ENCODE measurements at regions of chr11 and their contacts with region 1.

Region 1: DNA sequence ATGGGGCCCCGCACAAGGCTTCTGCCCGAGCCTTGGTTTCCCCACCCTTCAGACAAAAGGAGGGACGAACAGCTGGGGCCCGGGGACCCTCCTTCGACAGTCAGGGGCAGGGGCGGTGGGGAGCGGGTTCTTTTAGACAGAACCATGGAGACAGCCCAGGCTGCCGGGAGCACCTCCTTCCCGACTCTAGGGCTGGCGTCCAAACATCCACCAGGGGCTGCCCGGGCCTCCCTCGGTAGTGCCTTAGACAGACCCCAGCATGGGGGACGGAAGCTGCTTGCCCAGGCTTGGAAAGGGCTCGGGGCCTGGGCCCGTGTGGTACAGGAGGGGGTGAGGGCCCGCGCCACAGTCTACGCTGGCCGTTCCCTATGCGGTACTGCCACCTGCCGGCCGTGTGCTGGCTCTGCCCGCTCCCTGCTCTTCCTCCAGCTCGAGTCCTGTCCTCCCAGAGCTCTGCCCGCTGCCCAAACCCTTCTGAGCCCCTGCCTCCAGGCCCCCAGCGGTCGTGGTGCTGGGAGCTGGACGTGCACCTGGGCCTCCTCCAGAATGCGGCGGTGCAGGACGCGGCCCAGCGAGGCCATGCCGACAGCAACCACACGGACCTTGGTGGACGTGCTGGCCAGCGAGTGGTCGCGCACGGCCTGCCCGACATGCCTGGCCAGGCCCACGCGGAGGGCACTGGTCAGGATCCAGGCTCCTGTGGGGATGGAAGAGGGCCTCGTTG is 20.1 kb downstream of the TSSC4 start:
- DNase-seq: peak; percentile 84
- ATAC-seq: peak; percentile 94
- H3K4me3 Mint-ChIP-seq: no peak overlapping the region
- H3K27ac Mint-ChIP-seq: no peak overlapping the region
- H3K4me1 Mint-ChIP-seq: no peaks in the 10 kb centered on the region
- H3K27me3 Mint-ChIP-seq: peaks cover 4% of the 10 kb centered on the region
- CTCF ChIP-seq: peak; percentile 78

Region 2: GRCh38 chr11:2186669-2187279 is 233.9 kb before region 1 on chr11:
- CTCF ChIA-PET with region 1: interaction called, 28 read pairs
- POLR2A ChIA-PET with region 1: no interaction called
- DNase-seq: peak; percentile 56
- ATAC-seq: peak; percentile 78
- H3K4me3 Mint-ChIP-seq: no peak overlapping the region
- H3K27ac Mint-ChIP-seq: no peak overlapping the region
- H3K4me1 Mint-ChIP-seq: no peaks in the 10 kb centered on the region
- H3K27me3 Mint-ChIP-seq: peaks cover 5% of the 10 kb centered on the region
- CTCF ChIP-seq: peak; percentile 41

Region 3: DNA sequence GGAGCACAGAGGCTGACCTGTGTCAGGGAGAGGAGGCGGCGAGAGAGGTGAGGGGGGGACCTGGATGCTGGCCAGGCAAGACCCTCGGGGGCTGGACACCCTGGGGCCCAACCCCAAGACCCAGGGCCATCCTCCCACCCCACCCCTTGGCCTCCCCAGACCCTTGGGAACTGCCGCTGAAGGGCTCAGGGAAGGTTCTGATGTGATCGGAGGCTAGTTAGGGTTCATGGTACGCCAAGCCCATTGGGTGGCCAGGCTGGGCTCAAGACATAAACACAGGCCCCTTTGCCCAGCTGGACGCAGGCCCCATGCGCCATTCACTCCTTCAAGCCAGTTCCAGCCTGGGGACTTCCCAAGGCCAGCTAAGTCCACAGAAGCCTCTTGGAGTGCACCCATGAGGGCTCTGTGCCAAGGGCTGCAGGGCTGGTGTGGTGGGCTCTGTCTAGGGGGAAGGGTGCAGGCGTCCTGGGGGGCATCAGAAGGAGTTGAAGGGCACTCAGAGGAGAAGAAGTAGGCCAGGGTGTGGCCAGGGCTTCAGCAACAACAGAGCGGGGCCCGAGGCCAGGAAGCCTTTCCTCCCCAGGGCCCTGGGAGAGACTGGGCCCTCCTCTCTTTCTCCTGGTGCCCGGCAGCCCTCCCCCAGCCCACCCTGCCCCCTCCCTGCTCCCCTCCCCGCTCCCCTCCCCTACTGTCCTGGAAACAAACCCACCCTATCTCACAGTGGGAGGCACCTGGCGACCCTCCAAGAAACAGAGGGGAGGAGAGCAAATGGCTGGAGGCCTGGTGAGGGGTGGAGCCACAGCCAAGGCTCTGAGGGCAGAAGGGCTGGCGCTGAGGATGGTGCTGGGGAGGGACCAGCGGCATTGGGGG is 105.9 kb before region 1 on chr11:
- CTCF ChIA-PET with region 1: interaction called, 29 read pairs
- POLR2A ChIA-PET with region 1: no interaction called
- DNase-seq: no peak
- ATAC-seq: no peak
- H3K4me3 Mint-ChIP-seq: no peak overlapping the region
- H3K27ac Mint-ChIP-seq: no peak overlapping the region
- H3K4me1 Mint-ChIP-seq: no peaks in the 10 kb centered on the region
- H3K27me3 Mint-ChIP-seq: peaks cover under 1% of the 10 kb centered on the region; the same call in 1 of the 2 replicates
- CTCF ChIP-seq: no peak

Region 4: GRCh38 chr11:2382936-2383851 is 37.5 kb before region 1 on chr11:
- CTCF ChIA-PET with region 1: interaction called, 23 read pairs
- POLR2A ChIA-PET with region 1: no interaction called
- DNase-seq: no peak
- ATAC-seq: no peak; the same call in 1 of the 2 replicates
- H3K4me3 Mint-ChIP-seq: no peak overlapping the region
- H3K27ac Mint-ChIP-seq: no peak overlapping the region; the same call in 1 of the 2 replicates
- H3K4me1 Mint-ChIP-seq: peaks cover 18% of the 10 kb centered on the region
- H3K27me3 Mint-ChIP-seq: no peaks in the 10 kb centered on the region
- CTCF ChIP-seq: no peak

Region 5: GRCh38 chr11:2409611-2410468 is 10.8 kb before region 1 on chr11:
- CTCF ChIA-PET with region 1: interaction called, 81 read pairs
- POLR2A ChIA-PET with region 1: no interaction called
- DNase-seq: no peak
- ATAC-seq: no peak
- H3K4me3 Mint-ChIP-seq: no peak overlapping the region
- H3K27ac Mint-ChIP-seq: no peak overlapping the region
- H3K4me1 Mint-ChIP-seq: no peaks in the 10 kb centered on the region
- H3K27me3 Mint-ChIP-seq: no peaks in the 10 kb centered on the region
- CTCF ChIP-seq: no peak

Region 6: GRCh38 chr11:2532704-2533586 is 112.3 kb after region 1 on chr11:
- CTCF ChIA-PET with region 1: interaction called, 122 read pairs
- POLR2A ChIA-PET with region 1: no interaction called
- DNase-seq: peak; percentile 99
- ATAC-seq: peak; percentile 89
- H3K4me3 Mint-ChIP-seq: no peak overlapping the region
- H3K27ac Mint-ChIP-seq: no peak overlapping the region
- H3K4me1 Mint-ChIP-seq: peaks cover 10% of the 10 kb centered on the region
- H3K27me3 Mint-ChIP-seq: peaks cover 45% of the 10 kb centered on the region
- CTCF ChIP-seq: peak; percentile 99

Measured in WTC11 (cell line).